SK-N-SH (cell line): ENCODE measurements at regions of chr6 and their contacts with region 1.

Region 1: DNA sequence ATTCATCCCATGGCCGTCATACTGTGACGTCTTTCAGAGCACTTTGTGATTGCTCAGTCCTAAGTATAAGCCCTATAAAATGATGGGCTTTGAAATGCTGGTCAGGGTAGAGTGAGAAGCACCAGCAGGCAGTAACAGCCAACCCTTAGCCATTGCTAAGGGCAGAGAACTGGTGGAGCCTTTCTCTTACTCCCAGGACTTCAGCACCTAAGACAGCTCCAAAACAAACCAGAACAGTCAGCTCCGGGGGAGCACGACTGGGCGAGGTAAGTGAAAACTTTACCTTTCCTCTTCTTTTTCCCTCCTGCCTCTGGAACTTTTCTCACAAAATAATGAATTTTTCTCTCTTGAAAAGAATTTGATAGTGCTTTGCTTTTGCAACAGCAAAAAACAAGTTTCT is at the start of gene VIP:
- DNase-seq: no peak
- H3K4me3 ChIP-seq: peak within 1 kb of the TSS in 1 of 2 experiments; percentile 15; a peak in 1 of 4 replicates
- H3K27ac ChIP-seq: peak within 1 kb of the TSS; percentile 19 to 89; a peak in 3 of 4 replicates
- H3K4me1 ChIP-seq: peaks cover 0 to 12% of the 10 kb centered on the region in 2 experiments; a peak in 2 of 4 replicates
- H3K27me3 ChIP-seq: no peaks in the 10 kb centered on the region
- CTCF ChIP-seq: no peak
- EP300 ChIP-seq: no peak
- RAD21 ChIP-seq: no peak
- polyA plus RNA-seq, gene VIP: 2.5 and 4.8 TPM in 2 replicates

Region 2: DNA sequence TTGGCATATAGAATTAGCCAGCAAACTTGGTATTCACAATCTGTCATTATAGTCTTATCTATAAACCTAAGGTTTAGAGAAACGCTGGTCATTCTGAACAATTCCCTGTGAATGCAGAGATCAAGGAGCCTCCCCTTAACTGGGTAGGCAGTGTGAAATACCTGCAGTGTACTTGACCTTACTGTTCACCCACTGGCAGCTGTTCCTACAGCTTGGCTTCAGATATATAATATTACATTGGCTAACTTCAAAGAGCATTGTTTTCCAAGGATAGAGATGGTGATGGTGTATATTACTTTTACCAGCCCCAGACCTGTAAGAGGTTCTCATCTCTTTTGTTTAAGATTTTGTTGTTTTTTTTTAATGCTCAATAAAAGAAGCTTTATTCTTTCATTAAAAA is 774.9 kb before region 1 on chr6:
- CTCF ChIA-PET with region 1: no interaction called
- POLR2A ChIA-PET with region 1: no interaction called
- DNase-seq: no peak
- H3K4me3 ChIP-seq: no peak overlapping the region
- H3K27ac ChIP-seq: no peak overlapping the region
- H3K4me1 ChIP-seq: no peaks in the 10 kb centered on the region
- H3K27me3 ChIP-seq: no peaks in the 10 kb centered on the region
- CTCF ChIP-seq: no peak
- EP300 ChIP-seq: no peak
- RAD21 ChIP-seq: no peak

Region 3: GRCh38 chr6:152552616-152553209 is 198.0 kb before region 1 on chr6:
- CTCF ChIA-PET with region 1: interaction called, 13 read pairs
- POLR2A ChIA-PET with region 1: no interaction called
- DNase-seq: peak; percentile 55
- H3K4me3 ChIP-seq: peak overlapping the region in 1 of 2 experiments; percentile 49; a peak in 1 of 4 replicates
- H3K27ac ChIP-seq: no peak overlapping the region
- H3K4me1 ChIP-seq: peaks cover 0 to 5% of the 10 kb centered on the region in 2 experiments; a peak in 2 of 4 replicates
- H3K27me3 ChIP-seq: no peaks in the 10 kb centered on the region
- CTCF ChIP-seq: peak; percentile 70
- EP300 ChIP-seq: peak in 1 of 2 experiments; percentile 38; a peak in 1 of 4 replicates
- RAD21 ChIP-seq: peak; percentile 88

Region 4: DNA sequence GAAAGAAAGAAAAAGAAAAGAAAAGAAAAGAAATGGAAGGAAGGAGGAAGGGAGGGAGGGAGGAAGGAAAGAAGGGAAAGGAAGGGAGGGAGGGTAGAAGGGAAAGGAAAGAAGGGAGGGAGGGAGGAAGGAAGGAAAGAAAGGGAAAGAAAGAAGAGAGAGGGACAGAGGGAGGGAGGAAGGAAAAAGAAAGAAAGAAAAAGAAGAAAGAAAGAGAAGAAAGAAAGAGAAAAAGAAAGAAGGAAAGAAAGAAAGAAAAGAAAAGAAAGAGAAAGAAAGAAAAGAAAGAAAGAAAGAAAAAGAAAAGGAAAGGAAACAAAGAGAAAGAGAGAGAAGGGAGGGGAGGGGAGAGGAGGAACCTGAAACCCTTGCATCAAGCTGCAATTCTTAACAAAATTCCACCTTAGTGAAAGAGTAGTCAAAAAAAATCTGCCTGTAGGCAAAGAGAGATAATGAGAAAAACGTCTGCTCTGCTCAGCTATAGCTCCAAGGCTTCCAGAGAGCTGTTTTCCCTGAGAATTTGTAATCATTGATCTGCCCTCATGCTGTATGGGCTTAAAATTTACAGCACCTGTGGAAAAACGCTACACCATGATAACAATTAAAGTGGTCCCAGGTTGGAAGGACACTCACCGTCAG is 69.7 kb before region 1 on chr6:
- CTCF ChIA-PET with region 1: no interaction called
- POLR2A ChIA-PET with region 1: no interaction called
- DNase-seq: no peak
- H3K4me3 ChIP-seq: no peak overlapping the region
- H3K27ac ChIP-seq: peak overlapping the region in 1 of 2 experiments; percentile 16; a peak in 1 of 4 replicates
- H3K4me1 ChIP-seq: peaks cover 0 to 2% of the 10 kb centered on the region in 2 experiments; a peak in 2 of 4 replicates
- H3K27me3 ChIP-seq: no peaks in the 10 kb centered on the region
- CTCF ChIP-seq: no peak
- EP300 ChIP-seq: no peak
- RAD21 ChIP-seq: no peak

Region 5: DNA sequence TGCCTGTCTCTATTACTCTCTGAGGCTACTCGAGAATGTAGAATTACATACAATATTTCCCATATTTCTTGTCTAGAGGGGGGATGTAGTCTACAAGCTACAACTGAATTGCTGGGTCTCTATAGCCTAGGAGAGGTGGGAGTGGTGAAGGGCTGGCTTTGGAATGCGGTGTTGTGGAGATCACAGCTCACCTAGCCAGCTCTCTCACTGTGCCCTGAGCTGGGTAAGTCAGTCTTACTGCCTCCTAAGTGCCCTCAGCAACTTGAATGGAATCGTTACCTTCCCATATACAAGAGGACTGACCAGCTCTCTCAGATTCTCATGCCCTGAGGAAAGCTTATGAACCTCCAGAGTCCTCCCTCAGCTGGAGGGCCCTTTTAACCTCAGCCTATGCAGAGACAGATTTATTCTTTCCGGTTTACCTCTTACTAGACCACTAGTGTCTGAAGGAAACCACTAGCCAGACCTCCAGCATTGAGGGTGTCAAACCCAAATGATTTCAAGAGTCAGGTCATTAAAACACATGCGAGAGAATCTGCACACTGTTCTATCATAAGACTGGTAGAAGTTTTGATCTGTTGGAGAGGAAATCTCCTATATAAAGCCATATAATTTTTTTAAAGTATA is 20.5 kb after region 1 on chr6:
- CTCF ChIA-PET with region 1: interaction called, 12 read pairs
- POLR2A ChIA-PET with region 1: no interaction called
- DNase-seq: no peak
- H3K4me3 ChIP-seq: no peak overlapping the region
- H3K27ac ChIP-seq: no peak overlapping the region
- H3K4me1 ChIP-seq: no peaks in the 10 kb centered on the region; a peak in 1 of 4 replicates
- H3K27me3 ChIP-seq: no peaks in the 10 kb centered on the region
- CTCF ChIP-seq: no peak
- EP300 ChIP-seq: no peak
- RAD21 ChIP-seq: no peak

Region 6: GRCh38 chr6:152846825-152847224 is 96.1 kb after region 1 on chr6:
- CTCF ChIA-PET with region 1: interaction called, 15 read pairs
- POLR2A ChIA-PET with region 1: no interaction called
- DNase-seq: no peak
- H3K4me3 ChIP-seq: no peak overlapping the region
- H3K27ac ChIP-seq: no peak overlapping the region
- H3K4me1 ChIP-seq: no peaks in the 10 kb centered on the region
- H3K27me3 ChIP-seq: no peaks in the 10 kb centered on the region
- CTCF ChIP-seq: no peak
- EP300 ChIP-seq: no peak
- RAD21 ChIP-seq: no peak

Region 7: GRCh38 chr6:152897799-152898399 is 147.2 kb after region 1 on chr6:
- CTCF ChIA-PET with region 1: interaction called, 18 read pairs
- POLR2A ChIA-PET with region 1: no interaction called
- DNase-seq: peak; percentile 63
- H3K4me3 ChIP-seq: no peak overlapping the region; a peak in 1 of 4 replicates
- H3K27ac ChIP-seq: no peak overlapping the region
- H3K4me1 ChIP-seq: peaks cover 0 to 3% of the 10 kb centered on the region in 2 experiments; a peak in 2 of 4 replicates
- H3K27me3 ChIP-seq: no peaks in the 10 kb centered on the region
- CTCF ChIP-seq: peak; percentile 76
- EP300 ChIP-seq: no peak
- RAD21 ChIP-seq: peak; percentile 68

Region 8: DNA sequence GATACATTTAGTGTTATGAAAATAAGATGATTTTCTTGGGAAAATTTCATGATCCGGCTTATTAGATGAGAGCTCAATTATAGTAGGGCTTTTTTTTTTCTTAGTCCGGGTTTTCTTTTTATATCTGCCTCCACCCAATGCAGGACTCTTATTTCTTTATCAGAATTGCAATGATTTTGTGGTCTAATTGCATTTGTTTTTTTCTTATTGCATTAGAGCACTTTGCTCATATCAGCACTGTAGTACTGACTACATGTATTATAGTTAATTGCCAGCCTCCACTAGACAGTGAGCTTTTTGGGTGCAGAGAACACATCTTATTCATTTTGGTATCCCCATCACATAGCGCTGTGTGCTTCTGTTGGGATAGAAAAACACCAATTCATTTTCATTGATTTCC is 182.2 kb after region 1 on chr6:
- CTCF ChIA-PET with region 1: interaction called, 12 read pairs
- POLR2A ChIA-PET with region 1: no interaction called
- DNase-seq: peak; percentile 24
- H3K4me3 ChIP-seq: no peak overlapping the region
- H3K27ac ChIP-seq: no peak overlapping the region
- H3K4me1 ChIP-seq: no peaks in the 10 kb centered on the region; a peak in 2 of 4 replicates
- H3K27me3 ChIP-seq: no peaks in the 10 kb centered on the region
- CTCF ChIP-seq: no peak
- EP300 ChIP-seq: 0 out of 4 replicates have a peak, but pooled peaks of 1 of the 2 experiments have one; percentile 29
- RAD21 ChIP-seq: no peak

Region 9: GRCh38 chr6:153024709-153025017 is 274.0 kb after region 1 on chr6:
- CTCF ChIA-PET with region 1: interaction called, 10 read pairs
- POLR2A ChIA-PET with region 1: no interaction called
- DNase-seq: no peak
- H3K4me3 ChIP-seq: no peak overlapping the region
- H3K27ac ChIP-seq: no peak overlapping the region
- H3K4me1 ChIP-seq: no peaks in the 10 kb centered on the region
- H3K27me3 ChIP-seq: no peaks in the 10 kb centered on the region
- CTCF ChIP-seq: no peak; the same call in 1 of the 2 replicates
- EP300 ChIP-seq: no peak
- RAD21 ChIP-seq: no peak